Activated CD4-positive, alpha-beta T cell treated with anti-CD3 and anti-CD28 coated beads for 36 hours (primary cell): ENCODE measurements at regions of chr9 and their contacts with region 1.

Region 1: DNA sequence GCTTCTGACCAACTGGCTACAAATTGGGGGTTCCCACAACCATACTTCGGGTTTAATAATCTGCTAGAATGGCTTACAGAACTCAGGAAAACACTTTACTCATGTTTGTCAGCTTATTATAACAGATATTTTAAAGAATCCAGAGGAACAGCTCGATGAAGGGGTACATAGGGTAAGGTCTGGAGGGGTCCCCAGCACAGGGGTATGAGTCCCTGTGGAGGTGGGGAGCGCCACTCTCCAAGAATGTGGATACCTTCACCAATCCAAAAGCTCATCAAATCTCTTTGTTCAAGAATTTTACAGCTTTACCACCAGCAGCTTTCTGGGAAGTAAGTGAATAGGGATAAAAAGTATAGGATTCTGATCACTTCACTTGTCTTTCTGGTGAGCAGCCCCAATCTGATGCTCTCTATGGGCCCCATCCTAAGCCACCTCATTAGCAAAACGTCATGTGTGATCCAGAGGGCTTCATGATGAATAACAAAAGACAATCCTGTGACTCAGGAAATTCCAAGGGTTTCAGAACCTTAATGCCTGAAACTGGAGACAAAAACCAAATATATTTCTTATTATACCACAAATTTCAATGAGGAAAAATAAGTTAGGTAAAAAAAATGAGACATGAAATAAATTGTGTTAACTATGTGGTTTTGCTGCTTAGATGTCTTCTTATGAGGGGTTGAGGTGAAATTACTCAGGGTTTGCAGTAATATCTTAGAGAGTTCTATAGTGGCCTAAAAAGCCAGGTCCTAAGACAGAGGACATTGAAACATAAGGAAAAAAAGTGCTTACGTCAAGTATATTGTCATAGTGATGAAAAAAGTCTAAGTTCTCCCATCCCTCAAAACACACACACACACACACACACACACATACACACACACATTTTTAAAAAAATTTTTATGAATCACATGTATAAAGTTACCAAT is 290.5 kb downstream of the ANXA1 start:
- DNase-seq: no peak
- ATAC-seq: no peak
- H3K4me3 Mint-ChIP-seq: no peak overlapping the region
- H3K27ac Mint-ChIP-seq: no peak overlapping the region
- H3K4me1 Mint-ChIP-seq: no peaks in the 10 kb centered on the region
- H3K27me3 Mint-ChIP-seq: no peaks in the 10 kb centered on the region

Region 2: DNA sequence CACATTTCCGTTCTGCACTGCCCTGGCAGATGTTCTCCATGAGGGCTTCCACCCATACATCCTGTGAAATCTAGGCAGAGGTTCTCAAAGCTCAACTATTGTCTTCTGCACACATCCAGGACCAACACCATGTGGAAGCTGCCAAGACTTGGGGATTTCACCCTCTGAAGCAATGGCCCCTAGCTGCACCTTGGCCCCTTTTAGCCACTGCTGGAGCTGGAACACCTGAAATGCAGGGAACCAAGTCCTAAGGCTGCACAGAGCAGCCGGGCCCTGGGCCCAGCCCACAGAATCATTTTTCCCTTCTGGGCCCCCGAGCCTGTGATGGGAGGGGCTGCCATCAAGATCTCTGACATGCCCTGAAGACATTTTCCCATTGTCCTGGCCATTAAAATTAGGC is 61.7 kb before region 1 on chr9:
- CTCF ChIA-PET with region 1: no interaction called
- POLR2A ChIA-PET with region 1: no interaction called
- intact Hi-C with region 1: loop called in 1 of 2 experiments (anchors 10 kb)
- DNase-seq: no peak
- ATAC-seq: no peak
- H3K4me3 Mint-ChIP-seq: no peak overlapping the region
- H3K27ac Mint-ChIP-seq: no peak overlapping the region
- H3K4me1 Mint-ChIP-seq: no peaks in the 10 kb centered on the region
- H3K27me3 Mint-ChIP-seq: no peaks in the 10 kb centered on the region

Region 3: GRCh38 chr9:73411494-73411893 is 30.7 kb before region 1 on chr9:
- CTCF ChIA-PET with region 1: no interaction called
- POLR2A ChIA-PET with region 1: no interaction called
- intact Hi-C with region 1: no loop called
- DNase-seq: no peak
- ATAC-seq: no peak
- H3K4me3 Mint-ChIP-seq: no peak overlapping the region
- H3K27ac Mint-ChIP-seq: no peak overlapping the region
- H3K4me1 Mint-ChIP-seq: no peaks in the 10 kb centered on the region
- H3K27me3 Mint-ChIP-seq: peaks cover 2% of the 10 kb centered on the region